ENCODE measurements at regions of chr16 and their contacts with region 1.

Region 1: GRCh38 chr16:58086426-58087208 is 42.6 kb downstream of the CFAP20 start:
- DNase-seq: no peak
- H3K4me3 ChIP-seq: no peak overlapping the region
- H3K27ac ChIP-seq: no peak overlapping the region
- H3K4me1 ChIP-seq: no peaks in the 10 kb centered on the region
- H3K27me3 ChIP-seq: no peaks in the 10 kb centered on the region
- CTCF ChIP-seq: no peak
- POLR2A ChIP-seq: no peak

Region 2: GRCh38 chr16:58070585-58070984 is 16.0 kb before region 1 on chr16:
- intact Hi-C with region 1: loop called (anchors 2 kb)
- DNase-seq: no peak
- H3K4me3 ChIP-seq: no peak overlapping the region
- H3K27ac ChIP-seq: no peak overlapping the region
- H3K4me1 ChIP-seq: no peaks in the 10 kb centered on the region
- H3K27me3 ChIP-seq: no peaks in the 10 kb centered on the region
- CTCF ChIP-seq: no peak
- POLR2A ChIP-seq: no peak

Region 3: GRCh38 chr16:58317608-58318152 is 231.1 kb after region 1 on chr16:
- intact Hi-C with region 1: no loop called
- DNase-seq: no peak
- H3K4me3 ChIP-seq: no peak overlapping the region
- H3K27ac ChIP-seq: no peak overlapping the region
- H3K4me1 ChIP-seq: no peaks in the 10 kb centered on the region
- H3K27me3 ChIP-seq: no peaks in the 10 kb centered on the region
- CTCF ChIP-seq: no peak
- POLR2A ChIP-seq: no peak

Measured in vagina (tissue), 2 donors.